ENCODE measurements at regions of chr4 and their contacts with region 1.

Region 1: DNA sequence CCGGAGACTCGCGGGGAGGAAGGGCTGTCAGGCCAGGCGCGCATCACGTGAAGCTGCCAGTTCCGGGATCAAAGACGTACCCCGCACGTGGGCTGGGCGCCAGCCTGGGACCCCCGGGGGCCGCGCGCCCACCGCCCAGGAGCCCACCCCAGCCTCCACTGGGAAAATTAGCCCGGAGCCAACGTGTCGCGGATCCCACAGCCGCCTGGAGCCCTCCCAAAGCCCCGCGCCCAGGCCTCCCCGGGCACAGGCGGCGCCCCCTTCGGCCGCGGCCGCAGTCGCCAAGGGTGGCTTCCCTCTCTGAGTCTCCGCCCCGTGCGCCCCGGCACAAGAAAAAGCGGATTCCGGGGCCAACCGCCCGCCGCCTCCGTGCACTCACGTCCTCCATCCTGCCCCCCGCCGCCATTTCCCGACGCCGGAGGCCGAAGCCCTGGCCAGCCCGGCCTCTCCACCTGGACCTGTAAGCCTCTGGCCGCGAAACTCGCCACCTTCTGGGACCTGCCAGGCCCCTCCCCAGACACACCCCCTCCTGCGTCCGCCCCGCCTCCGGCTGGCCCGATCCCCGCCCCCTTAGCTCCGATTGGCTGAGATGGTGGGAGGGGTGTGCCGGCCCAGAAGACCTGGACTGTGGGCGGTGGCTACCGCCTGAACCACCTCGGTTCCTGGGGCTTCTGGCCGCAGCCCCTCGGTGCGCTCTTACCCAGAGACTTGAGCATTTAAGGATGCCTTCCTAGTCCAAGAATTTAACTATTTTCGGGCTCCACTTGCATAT is at the start of gene TMEM192:
- DNase-seq: peak; percentile 90 to 93 (median 92)
- H3K4me3 ChIP-seq: peak within 1 kb of the TSS; percentile 55
- H3K4me3 Mint-ChIP-seq: peak within 1 kb of the TSS; percentile 88 to 99 (median 94)
- H3K27ac ChIP-seq: peak within 1 kb of the TSS; percentile 66
- H3K27ac Mint-ChIP-seq: peak within 1 kb of the TSS; percentile 65 to 98 (median 95)
- H3K4me1 ChIP-seq: peaks cover 12% of the 10 kb centered on the region
- H3K4me1 Mint-ChIP-seq: peaks cover 17 to 33% (median 23%) of the 10 kb centered on the region in 3 donors
- H3K27me3 ChIP-seq: no peaks in the 10 kb centered on the region
- H3K27me3 Mint-ChIP-seq: peaks cover 2 to 12% of the 10 kb centered on the region in 2 donors
- total RNA-seq, gene TMEM192: 18.1 to 20.8 TPM

Region 2: DNA sequence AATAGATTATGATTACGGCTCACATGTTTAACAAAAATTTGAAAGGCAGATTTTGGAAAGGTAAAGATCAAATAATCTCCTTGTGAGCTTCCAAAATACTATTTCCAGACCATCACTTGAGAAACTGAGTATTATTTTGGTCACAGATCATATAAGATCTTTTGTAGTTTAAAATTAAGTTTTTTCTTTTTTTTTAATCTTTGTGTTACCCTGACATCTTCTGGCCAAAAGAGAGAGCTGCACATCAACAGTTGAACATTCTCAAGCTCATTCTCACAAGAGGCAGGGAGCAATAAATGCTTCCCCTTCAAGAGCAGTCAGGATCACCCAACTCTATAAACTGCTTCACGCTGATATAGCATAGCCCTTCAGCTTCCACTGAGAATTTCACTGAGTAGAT is 15.8 kb before region 1 on chr4:
- CTCF ChIA-PET with region 1: interaction called, 10 read pairs
- POLR2A ChIA-PET with region 1: no interaction called
- DNase-seq: no peak
- H3K4me3 ChIP-seq: no peak overlapping the region
- H3K4me3 Mint-ChIP-seq: no peak overlapping the region
- H3K27ac ChIP-seq: no peak overlapping the region
- H3K27ac Mint-ChIP-seq: peak overlapping the region in 1 of 8 donors; percentile 27
- H3K4me1 ChIP-seq: no peaks in the 10 kb centered on the region
- H3K4me1 Mint-ChIP-seq: no peaks in the 10 kb centered on the region
- H3K27me3 ChIP-seq: no peaks in the 10 kb centered on the region
- H3K27me3 Mint-ChIP-seq: no peaks in the 10 kb centered on the region

Region 3: DNA sequence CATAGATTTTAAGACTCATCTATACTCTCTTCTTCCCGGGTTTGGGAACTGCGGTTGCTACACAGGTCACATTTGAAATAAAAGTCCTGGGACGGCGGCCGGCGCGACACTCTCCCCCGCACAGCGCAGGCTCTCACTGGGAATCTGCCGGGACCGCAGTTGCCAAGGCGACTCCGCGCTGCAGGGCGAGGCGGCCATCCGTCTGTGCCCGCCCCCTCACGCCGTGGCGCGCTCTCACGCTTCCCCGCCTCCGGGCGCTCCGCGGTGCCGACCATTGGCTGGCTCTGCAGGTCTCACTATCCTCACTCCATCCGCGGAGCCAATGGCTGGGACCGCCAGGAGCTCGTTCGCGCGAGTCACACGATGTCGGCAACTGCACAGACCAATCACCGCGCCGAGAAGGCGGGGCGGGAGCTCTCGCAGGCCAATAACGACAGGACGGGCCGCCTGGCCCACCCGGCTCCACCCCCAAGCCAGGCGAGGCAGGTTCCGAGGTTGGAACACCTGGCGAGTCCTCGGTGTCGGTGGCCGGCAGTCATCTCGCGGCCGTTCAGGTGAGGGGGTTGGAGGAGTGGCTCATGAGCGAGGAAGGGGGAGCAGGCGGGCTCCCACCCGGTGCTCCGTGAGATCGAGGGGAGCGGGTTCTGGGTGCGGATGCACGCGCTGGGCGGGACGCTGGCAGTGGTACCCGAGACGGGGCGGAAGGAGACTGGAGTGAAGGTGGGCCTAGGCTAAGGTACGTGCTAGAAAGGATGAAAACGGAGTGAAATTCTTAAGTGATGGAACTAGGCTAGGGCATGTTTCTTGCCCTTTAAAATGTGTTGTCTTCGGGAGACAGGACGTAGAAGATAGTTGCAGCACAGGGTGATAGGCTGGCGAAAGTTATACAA is 214.9 kb after region 1 on chr4 and contains the start of gene MSMO1:
- CTCF ChIA-PET with region 1: interaction called, 16 read pairs
- POLR2A ChIA-PET with region 1: interaction called, 13 read pairs
- DNase-seq: peak; percentile 97 to 99 (median 98)
- H3K4me3 ChIP-seq: peak within 1 kb of the TSS; percentile 87
- H3K4me3 Mint-ChIP-seq: no peak within 1 kb of the TSS
- H3K27ac ChIP-seq: peak within 1 kb of the TSS; percentile 86
- H3K27ac Mint-ChIP-seq: peak within 1 kb of the TSS in 1 of 8 donors; percentile 89
- H3K4me1 ChIP-seq: peaks cover 25% of the 10 kb centered on the region
- H3K4me1 Mint-ChIP-seq: peaks cover 23 to 29% (median 28%) of the 10 kb centered on the region in 3 donors
- H3K27me3 ChIP-seq: no peaks in the 10 kb centered on the region
- H3K27me3 Mint-ChIP-seq: peaks cover 0 to 3% of the 10 kb centered on the region in 2 donors
- total RNA-seq, gene MSMO1: 26.8 to 29.1 TPM

Measured in CD8-positive, alpha-beta memory T cell (primary cell).